ENCODE measurements at regions of chr12 and their contacts with region 1.

Region 1: GRCh38 chr12:15494329-15495046 is 172.2 kb downstream of the PTPRO start:
- DNase-seq: peak in 1 of 14 experiments; percentile 1
- ATAC-seq: no peak
- H3K4me3 ChIP-seq: no peak overlapping the region
- H3K4me3 Mint-ChIP-seq: no peak overlapping the region
- H3K27ac ChIP-seq: no peak overlapping the region
- H3K27ac Mint-ChIP-seq: no peak overlapping the region
- H3K4me1 ChIP-seq: no peaks in the 10 kb centered on the region
- H3K4me1 Mint-ChIP-seq: no peaks in the 10 kb centered on the region
- H3K27me3 ChIP-seq: no peaks in the 10 kb centered on the region
- H3K27me3 Mint-ChIP-seq: peaks cover 34% of the 10 kb centered on the region
- CTCF ChIP-seq: no peak

Region 2: DNA sequence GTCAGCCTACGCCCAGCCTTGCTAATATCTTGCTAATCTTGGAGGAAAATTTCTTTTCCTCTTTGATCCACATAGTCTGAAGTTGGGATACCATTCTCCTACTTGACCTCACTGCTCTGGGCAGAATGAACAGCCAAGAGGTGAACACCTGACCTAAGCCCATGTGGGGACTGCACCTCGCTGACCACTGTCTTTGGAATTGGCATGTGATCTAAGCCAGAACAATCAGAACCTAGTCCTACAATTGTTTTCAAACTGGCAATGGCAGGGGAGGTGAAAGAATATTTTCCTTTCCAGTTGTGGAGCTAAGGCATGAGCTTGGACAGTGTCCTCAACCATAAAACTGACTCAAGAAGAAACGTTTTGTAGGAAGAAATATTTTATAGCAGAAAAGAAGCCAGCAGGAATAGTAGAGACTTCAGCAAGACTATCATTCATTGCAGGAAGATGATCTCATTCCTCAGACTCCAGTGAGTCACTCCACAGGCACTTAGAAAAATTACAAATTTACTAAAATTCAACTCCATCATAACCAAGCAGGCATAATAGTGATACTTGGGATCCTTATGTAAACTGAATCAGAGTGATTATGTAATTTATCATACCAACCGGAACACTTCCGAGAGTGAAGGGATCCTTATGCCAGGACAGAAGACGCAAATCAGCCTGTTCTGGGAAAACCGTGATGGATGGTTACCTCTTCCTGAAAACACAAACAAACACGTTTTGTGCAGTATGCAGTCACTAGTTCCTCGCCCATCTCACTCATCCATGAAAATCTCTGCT is 157.5 kb before region 1 on chr12:
- CTCF ChIA-PET with region 1: no interaction called
- POLR2A ChIA-PET with region 1: no interaction called
- intact Hi-C with region 1: loop called in 1 of 2 experiments (anchors 5 kb)
- DNase-seq: no peak
- ATAC-seq: no peak
- H3K4me3 ChIP-seq: no peak overlapping the region
- H3K4me3 Mint-ChIP-seq: no peak overlapping the region
- H3K27ac ChIP-seq: no peak overlapping the region
- H3K27ac Mint-ChIP-seq: no peak overlapping the region
- H3K4me1 ChIP-seq: no peaks in the 10 kb centered on the region
- H3K4me1 Mint-ChIP-seq: no peaks in the 10 kb centered on the region
- H3K27me3 ChIP-seq: peaks cover 0 to 7% of the 10 kb centered on the region in 2 experiments
- H3K27me3 Mint-ChIP-seq: peaks cover 39% of the 10 kb centered on the region
- CTCF ChIP-seq: no peak

Region 3: DNA sequence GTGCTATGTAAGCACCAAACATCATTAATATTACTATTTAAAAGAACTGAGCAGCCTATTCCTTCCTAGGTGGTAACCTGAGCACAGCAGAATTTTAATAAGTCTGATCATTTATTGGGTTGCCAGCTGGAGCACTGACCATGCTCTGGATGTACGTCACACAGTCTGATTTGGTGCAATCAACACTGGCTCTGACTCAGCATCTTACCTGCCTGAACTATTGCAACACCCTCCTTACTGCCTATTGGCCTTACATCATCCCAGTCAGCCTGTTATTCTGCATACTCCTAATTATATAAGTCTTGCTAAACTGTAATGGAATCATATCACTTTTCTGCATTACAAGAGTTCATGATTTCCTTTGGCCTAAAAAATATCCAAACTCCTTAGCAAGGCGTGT is 22.5 kb before region 1 on chr12:
- CTCF ChIA-PET with region 1: no interaction called
- POLR2A ChIA-PET with region 1: no interaction called
- intact Hi-C with region 1: no loop called
- DNase-seq: no peak
- ATAC-seq: no peak
- H3K4me3 ChIP-seq: no peak overlapping the region
- H3K4me3 Mint-ChIP-seq: no peak overlapping the region
- H3K27ac ChIP-seq: no peak overlapping the region
- H3K27ac Mint-ChIP-seq: no peak overlapping the region
- H3K4me1 ChIP-seq: no peaks in the 10 kb centered on the region
- H3K4me1 Mint-ChIP-seq: no peaks in the 10 kb centered on the region
- H3K27me3 ChIP-seq: peaks cover 0 to 4% of the 10 kb centered on the region in 2 experiments
- H3K27me3 Mint-ChIP-seq: peaks cover 41% of the 10 kb centered on the region
- CTCF ChIP-seq: no peak

Measured in CD4-positive, alpha-beta T cell (primary cell).